GM10248 (cell line): ENCODE measurements at regions of chr19 and their contacts with region 1.

Region 1: GRCh38 chr19:49937750-49938381 is 8.6 kb upstream of the NUP62 start:
- DNase-seq: peak; percentile 86
- CTCF ChIP-seq: peak; percentile 92

Region 2: DNA sequence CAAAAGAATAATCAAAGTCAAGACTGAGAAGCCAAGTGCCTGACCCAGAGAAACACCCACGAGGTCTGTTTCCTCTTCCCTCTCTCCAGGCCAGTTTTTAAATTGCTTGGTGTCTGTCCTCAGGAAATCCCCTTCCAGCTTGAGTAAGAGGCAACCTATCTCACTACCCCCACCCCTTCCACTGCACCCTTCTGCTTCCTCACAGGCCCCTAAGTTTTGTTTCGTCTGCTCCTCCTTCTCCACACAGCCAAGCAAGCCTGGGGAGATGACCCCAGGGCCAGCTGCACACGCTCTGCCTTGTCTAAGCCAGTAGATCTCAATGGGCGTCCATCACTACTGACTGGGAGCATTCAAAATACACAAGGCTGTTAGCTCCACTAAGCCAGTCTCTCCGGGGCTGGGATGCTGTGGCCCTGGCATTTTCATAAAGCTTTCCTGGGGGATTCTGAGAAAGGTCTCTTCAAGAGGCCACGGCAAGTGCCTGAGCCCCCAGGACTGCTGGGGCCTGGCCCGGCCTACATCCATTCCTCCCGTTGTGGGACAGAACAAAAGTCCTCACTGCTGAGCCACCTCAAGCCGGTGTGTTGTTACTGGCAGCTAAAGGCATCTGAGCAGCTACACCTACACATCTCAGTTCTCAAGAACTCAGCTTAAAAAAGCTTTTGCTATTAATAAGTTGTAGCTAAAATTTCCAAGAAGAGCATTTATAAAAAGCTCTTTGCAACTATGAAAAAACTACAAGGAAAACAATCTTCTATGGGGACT is 26.3 kb before region 1 on chr19:
- CTCF ChIA-PET with region 1: interaction called, 10 read pairs
- POLR2A ChIA-PET with region 1: no interaction called
- DNase-seq: peak; percentile 79
- CTCF ChIP-seq: no peak

Region 3: GRCh38 chr19:49954079-49954829 is 16.4 kb after region 1 on chr19:
- CTCF ChIA-PET with region 1: interaction called, 17 read pairs
- POLR2A ChIA-PET with region 1: interaction called, 3 read pairs
- DNase-seq: no peak
- CTCF ChIP-seq: no peak

Region 4: GRCh38 chr19:49978324-49978723 is 40.5 kb after region 1 on chr19:
- CTCF ChIA-PET with region 1: interaction called, 29 read pairs
- POLR2A ChIA-PET with region 1: no interaction called
- DNase-seq: no peak
- CTCF ChIP-seq: no peak

Region 5: GRCh38 chr19:49983645-49984229 is 45.9 kb after region 1 on chr19:
- CTCF ChIA-PET with region 1: interaction called, 29 read pairs
- POLR2A ChIA-PET with region 1: no interaction called
- DNase-seq: peak; percentile 80
- CTCF ChIP-seq: peak; percentile 84